Ascending aorta (tissue), 2 donors: ENCODE measurements at regions of chr11 and their contacts with region 1.

Region 1: DNA sequence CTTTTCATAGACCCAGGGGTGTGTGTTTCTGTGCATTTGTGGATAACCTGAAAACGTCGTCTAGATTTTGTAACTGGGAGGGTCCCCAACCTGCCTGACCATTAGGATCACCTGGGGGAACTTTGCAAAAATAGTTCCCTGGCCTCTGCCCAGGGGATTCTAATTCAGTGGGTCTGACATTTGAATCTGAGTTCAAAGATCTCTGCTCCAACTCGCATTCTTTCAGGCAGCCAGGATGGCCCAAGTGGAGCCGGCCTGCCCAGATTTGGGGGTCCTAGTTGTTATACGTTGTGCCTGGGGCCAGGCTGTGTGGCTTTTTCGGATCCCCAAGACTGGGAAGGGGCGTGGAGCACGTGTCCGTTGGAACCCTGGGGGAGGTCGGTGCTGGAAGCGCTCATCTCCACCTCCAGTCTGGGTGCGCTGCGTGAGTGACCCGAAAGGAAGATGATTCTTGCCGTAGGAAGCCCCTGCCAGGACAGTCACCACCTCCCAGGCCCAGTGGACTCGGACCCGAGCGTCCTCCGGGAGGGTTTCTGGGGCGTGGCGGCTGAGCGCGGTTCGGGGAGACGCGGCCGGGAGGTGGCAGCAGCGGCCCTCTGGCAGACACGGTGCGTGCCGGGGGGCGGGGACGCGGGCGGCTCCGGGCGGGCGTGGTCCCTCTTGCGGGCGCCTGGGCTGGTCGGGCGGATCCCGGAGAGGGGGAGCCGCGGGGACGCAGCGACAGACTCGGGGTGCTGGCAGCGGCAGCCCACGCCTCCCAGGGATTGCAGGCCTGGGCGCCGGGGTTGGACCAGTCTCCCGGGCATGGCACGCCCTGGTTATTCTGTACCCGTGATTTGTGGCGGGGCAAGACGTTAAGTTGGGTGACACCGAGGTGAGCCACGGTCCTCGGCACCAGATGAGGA is 29.2 kb upstream of the PLET1 start:
- DNase-seq: peak in 1 of 2 donors; percentile 92
- H3K4me3 ChIP-seq: peak overlapping the region; percentile 77 to 84
- H3K27ac ChIP-seq: peak overlapping the region; percentile 88
- H3K4me1 ChIP-seq: peaks cover 8 to 23% of the 10 kb centered on the region in 2 donors
- H3K27me3 ChIP-seq: no peaks in the 10 kb centered on the region
- CTCF ChIP-seq: peak; percentile 74 to 88 (median 88)

Region 2: DNA sequence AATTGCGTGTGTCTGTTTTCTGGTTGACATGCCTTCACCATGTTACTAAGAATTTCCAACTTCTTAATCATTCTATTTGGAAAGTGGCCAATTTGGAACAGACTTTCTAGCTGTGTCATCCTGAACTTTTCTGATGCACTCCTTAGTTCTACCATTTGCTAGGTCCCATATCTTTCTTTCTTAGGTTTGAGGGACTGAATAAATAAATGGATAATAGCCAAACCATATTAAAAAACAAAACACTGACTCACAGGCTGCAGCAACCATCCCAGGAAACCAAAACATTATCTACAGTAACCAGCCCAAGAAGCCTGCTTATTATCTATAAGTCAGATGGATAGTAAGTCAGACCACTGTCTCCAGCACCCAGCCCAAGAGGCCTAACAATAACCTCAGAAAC is 28.4 kb after region 1 on chr11:
- intact Hi-C with region 1: loop called (anchors 2 kb)
- DNase-seq: no peak
- H3K4me3 ChIP-seq: no peak overlapping the region
- H3K27ac ChIP-seq: peak overlapping the region; percentile 66 to 75
- H3K4me1 ChIP-seq: peaks cover 0 to 32% of the 10 kb centered on the region in 2 donors
- H3K27me3 ChIP-seq: no peaks in the 10 kb centered on the region
- CTCF ChIP-seq: no peak

Region 3: GRCh38 chr11:112555491-112556364 is 265.9 kb after region 1 on chr11:
- intact Hi-C with region 1: loop called (anchors 1 kb)
- DNase-seq: peak in 1 of 2 donors; percentile 75
- H3K4me3 ChIP-seq: no peak overlapping the region
- H3K27ac ChIP-seq: no peak overlapping the region
- H3K4me1 ChIP-seq: peaks cover 0 to 3% of the 10 kb centered on the region in 2 donors
- H3K27me3 ChIP-seq: no peaks in the 10 kb centered on the region
- CTCF ChIP-seq: peak; percentile 59 to 66 (median 65)

Region 4: GRCh38 chr11:112795142-112795815 is 505.4 kb after region 1 on chr11:
- intact Hi-C with region 1: loop called (anchors 2 kb)
- DNase-seq: no peak
- H3K4me3 ChIP-seq: no peak overlapping the region
- H3K27ac ChIP-seq: peak overlapping the region; percentile 83 to 87
- H3K4me1 ChIP-seq: peaks cover 4 to 17% of the 10 kb centered on the region in 2 donors
- H3K27me3 ChIP-seq: no peaks in the 10 kb centered on the region
- CTCF ChIP-seq: peak; percentile 42 to 60 (median 43)

Region 5: GRCh38 chr11:113119074-113119473 is 829.2 kb after region 1 on chr11:
- intact Hi-C with region 1: loop called (anchors 5 kb)
- DNase-seq: no peak
- H3K4me3 ChIP-seq: no peak overlapping the region
- H3K27ac ChIP-seq: peak overlapping the region; percentile 64 to 70
- H3K4me1 ChIP-seq: peaks cover 0 to 17% of the 10 kb centered on the region in 2 donors
- H3K27me3 ChIP-seq: no peaks in the 10 kb centered on the region
- CTCF ChIP-seq: no peak

Region 6: GRCh38 chr11:113197443-113197842 is 907.6 kb after region 1 on chr11:
- intact Hi-C with region 1: loop called (anchors 2 kb)
- DNase-seq: no peak
- H3K4me3 ChIP-seq: no peak overlapping the region
- H3K27ac ChIP-seq: no peak overlapping the region
- H3K4me1 ChIP-seq: no peaks in the 10 kb centered on the region
- H3K27me3 ChIP-seq: no peaks in the 10 kb centered on the region
- CTCF ChIP-seq: no peak

Region 7: GRCh38 chr11:113773416-113774173 is 1483.8 kb after region 1 on chr11 and contains the start of gene ZW10:
- intact Hi-C with region 1: loop called (anchors 10 kb)
- DNase-seq: peak; percentile 82 to 98
- H3K4me3 ChIP-seq: peak within 1 kb of the TSS; percentile 89 to 96
- H3K27ac ChIP-seq: peak within 1 kb of the TSS; percentile 84 to 85
- H3K4me1 ChIP-seq: peaks cover 0 to 15% of the 10 kb centered on the region in 2 donors
- H3K27me3 ChIP-seq: no peaks in the 10 kb centered on the region
- CTCF ChIP-seq: peak; percentile 55 to 86 (median 82)
- total RNA-seq, gene ZW10: 12.3 TPM